K562 (cell line): ENCODE measurements at regions of chr6 and their contacts with region 1.

Region 1: GRCh38 chr6:42996513-42996912 is 12.1 kb downstream of the PPP2R5D start:
- DNase-seq: no peak
- ATAC-seq: no peak
- H3K4me3 ChIP-seq: no peak overlapping the region
- H3K27ac ChIP-seq: no peak overlapping the region
- H3K4me1 ChIP-seq: 0 out of 5 replicates have a peak, but pooled peaks cover 0 to 4% of the 10 kb centered on the region in 2 experiments
- H3K27me3 ChIP-seq: no peaks in the 10 kb centered on the region
- CTCF ChIP-seq: 0 out of 6 replicates have a peak, but pooled peaks of 1 of the 3 experiments have one; percentile 3
- EP300 ChIP-seq: no peak
- POLR2A ChIP-seq: no peak
- RAD21 ChIP-seq: no peak

Region 2: DNA sequence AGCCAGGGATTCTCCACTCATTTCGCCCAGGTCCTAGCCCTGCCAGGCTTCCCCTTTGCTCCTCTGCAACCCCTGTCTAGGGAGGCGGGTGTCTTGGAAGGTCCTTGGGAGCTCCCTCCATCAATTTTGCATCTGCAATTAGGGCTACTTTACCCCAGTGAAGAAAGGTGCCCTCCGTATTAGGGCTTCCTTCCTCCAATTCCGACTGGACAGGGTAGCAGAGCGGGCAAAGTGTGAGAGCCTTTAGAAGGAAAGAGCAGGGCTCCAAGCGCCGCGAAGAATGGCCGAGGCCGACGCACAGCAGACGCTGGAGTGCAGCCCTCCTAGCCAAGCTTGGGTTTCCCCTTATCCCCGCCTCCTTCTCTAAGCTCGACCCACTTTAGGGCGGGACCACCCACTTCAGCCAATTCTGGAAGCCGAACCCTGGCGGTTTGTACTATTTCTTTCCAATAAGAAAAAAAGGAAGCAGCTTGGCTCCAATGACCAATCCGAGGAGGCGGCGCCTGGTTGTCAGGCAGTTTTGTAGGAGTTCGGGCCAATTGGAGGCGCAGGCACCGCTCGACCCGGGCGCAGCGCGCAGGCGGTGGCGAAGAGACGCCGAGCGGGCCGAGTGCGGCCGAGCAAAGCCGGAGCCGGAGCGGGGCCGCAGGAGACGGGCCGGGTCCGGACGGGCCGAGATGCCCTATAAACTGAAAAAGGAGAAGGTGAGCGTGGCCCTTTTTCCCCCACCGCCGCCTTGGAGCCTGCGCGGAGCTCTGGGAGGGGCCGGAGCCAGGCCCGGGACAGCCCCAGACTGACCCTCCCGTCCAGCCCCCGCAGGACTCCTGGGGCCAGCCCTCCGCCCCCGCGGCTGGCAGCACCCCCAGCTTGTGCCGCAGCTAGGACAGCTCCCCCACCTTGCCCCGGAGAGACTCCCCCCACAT is 12.3 kb before region 1 on chr6 and contains the start of gene PPP2R5D:
- CTCF ChIA-PET with region 1: no interaction called
- POLR2A ChIA-PET with region 1: interaction called, 12 read pairs
- in situ Hi-C with region 1: no loop called
- intact Hi-C with region 1: no loop called
- DNase-seq: peak; percentile 93 to 100 (median 96)
- ATAC-seq: peak; percentile 96
- H3K4me3 ChIP-seq: peak within 1 kb of the TSS; percentile 64
- H3K27ac ChIP-seq: peak within 1 kb of the TSS; percentile 69
- H3K4me1 ChIP-seq: peaks cover 38 to 39% of the 10 kb centered on the region in 2 experiments
- H3K27me3 ChIP-seq: no peaks in the 10 kb centered on the region
- CTCF ChIP-seq: no peak; a peak in 1 of 6 replicates
- EP300 ChIP-seq: no peak
- POLR2A ChIP-seq: peak; percentile 90
- RAD21 ChIP-seq: no peak
- polyA plus RNA-seq, gene PPP2R5D: 1.3 to 1.9 TPM